ENCODE measurements at regions of chr4 and their contacts with region 1.

Region 1: DNA sequence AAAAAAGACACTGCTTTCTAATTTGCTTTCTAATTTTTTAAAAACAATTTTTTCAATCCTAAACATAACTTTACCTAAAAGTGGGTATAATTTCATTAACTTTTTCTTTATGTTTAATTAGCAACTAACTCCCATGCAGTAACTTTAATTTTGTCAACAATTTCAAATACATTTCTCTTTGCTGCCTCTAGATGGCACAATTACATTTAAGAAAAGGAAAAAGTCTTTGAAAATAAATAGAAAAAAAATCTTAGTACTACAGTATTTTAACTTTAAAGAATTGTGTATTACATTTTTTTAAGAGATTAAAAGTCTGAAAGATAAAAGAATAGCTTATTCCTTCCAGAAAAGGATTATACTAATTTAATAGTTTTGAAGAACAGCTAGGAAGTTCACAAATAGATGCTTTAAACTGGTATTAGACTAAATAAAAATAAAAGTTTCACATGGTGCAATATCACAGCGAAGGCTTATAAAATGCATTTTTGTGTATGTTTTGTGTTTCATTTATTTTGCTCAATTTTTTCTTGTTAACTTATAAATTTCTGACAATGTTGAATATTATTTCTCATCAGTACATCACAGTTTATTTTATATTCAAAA is 105.1 kb downstream of the ADGRA3 start:
- DNase-seq: no peak
- ATAC-seq: no peak
- H3K4me3 Mint-ChIP-seq: no peak overlapping the region
- H3K27ac Mint-ChIP-seq: no peak overlapping the region
- H3K4me1 Mint-ChIP-seq: no peaks in the 10 kb centered on the region
- H3K27me3 Mint-ChIP-seq: no peaks in the 10 kb centered on the region
- CTCF ChIP-seq: peak; percentile 77

Region 2: GRCh38 chr4:22323691-22324090 is 87.1 kb before region 1 on chr4:
- CTCF ChIA-PET with region 1: no interaction called
- POLR2A ChIA-PET with region 1: no interaction called
- intact Hi-C with region 1: no loop called
- DNase-seq: no peak
- ATAC-seq: no peak
- H3K4me3 Mint-ChIP-seq: no peak overlapping the region
- H3K27ac Mint-ChIP-seq: no peak overlapping the region
- H3K4me1 Mint-ChIP-seq: no peaks in the 10 kb centered on the region
- H3K27me3 Mint-ChIP-seq: no peaks in the 10 kb centered on the region
- CTCF ChIP-seq: no peak

Region 3: DNA sequence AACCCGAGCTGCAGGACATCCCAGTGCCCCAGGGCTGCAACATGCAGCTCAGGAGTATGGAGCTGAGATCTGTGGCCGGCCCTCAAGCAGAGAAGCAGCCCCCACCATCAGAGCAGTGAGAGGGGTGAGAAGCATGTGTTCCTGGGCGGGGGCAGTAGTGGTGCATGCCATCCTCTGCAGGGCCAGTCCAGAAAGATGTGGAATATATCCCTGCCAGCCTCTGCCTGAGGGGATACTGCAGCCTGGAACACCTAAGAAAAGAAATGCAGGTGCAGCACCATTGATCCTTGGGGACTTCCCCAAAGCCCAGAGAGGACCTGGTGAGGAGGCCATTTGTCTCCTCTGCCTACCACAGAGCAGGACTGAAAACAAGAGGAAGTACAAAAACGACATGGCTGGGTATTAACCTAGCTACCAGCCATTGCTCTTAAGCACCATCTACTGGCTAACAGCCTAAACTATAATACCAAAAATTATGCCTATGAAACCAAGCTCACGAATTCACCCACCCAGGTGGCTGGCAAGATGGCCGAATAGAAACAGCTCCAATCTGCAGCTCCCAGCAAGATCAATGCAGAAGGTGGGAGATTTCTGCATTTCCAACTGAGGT is 53.7 kb before region 1 on chr4:
- CTCF ChIA-PET with region 1: no interaction called
- POLR2A ChIA-PET with region 1: no interaction called
- intact Hi-C with region 1: no loop called
- DNase-seq: no peak
- ATAC-seq: peak; percentile 71
- H3K4me3 Mint-ChIP-seq: no peak overlapping the region
- H3K27ac Mint-ChIP-seq: no peak overlapping the region
- H3K4me1 Mint-ChIP-seq: no peaks in the 10 kb centered on the region
- H3K27me3 Mint-ChIP-seq: no peaks in the 10 kb centered on the region
- CTCF ChIP-seq: no peak

Region 4: GRCh38 chr4:22463179-22463578 is 52.4 kb after region 1 on chr4:
- CTCF ChIA-PET with region 1: interaction called, 10 read pairs
- POLR2A ChIA-PET with region 1: no interaction called
- intact Hi-C with region 1: no loop called
- DNase-seq: peak; percentile 65
- ATAC-seq: peak; percentile 47
- H3K4me3 Mint-ChIP-seq: no peak overlapping the region
- H3K27ac Mint-ChIP-seq: no peak overlapping the region
- H3K4me1 Mint-ChIP-seq: peaks cover 6% of the 10 kb centered on the region
- H3K27me3 Mint-ChIP-seq: no peaks in the 10 kb centered on the region
- CTCF ChIP-seq: peak; percentile 22

Region 5: DNA sequence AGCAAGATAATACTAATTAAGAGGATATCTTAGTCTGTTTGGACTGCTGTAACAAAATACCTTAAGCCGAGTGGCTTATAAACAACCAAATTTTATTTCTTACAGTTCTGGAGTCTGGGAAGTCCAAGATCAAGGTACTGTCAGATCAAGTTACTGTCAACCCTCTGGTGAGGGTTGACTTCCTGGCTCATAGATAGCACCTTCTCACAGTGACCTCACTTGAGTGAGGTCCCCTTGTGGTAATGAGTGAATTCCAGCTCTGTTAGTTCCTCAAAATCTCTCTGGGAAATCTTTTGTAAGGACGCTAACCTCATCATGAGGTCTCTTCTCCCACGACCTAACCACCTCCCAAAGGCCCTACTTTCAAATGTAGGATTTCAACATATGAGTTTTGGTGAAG is 142.1 kb after region 1 on chr4:
- CTCF ChIA-PET with region 1: no interaction called
- POLR2A ChIA-PET with region 1: no interaction called
- intact Hi-C with region 1: no loop called
- DNase-seq: no peak
- ATAC-seq: no peak
- H3K4me3 Mint-ChIP-seq: no peak overlapping the region
- H3K27ac Mint-ChIP-seq: no peak overlapping the region
- H3K4me1 Mint-ChIP-seq: no peaks in the 10 kb centered on the region
- H3K27me3 Mint-ChIP-seq: no peaks in the 10 kb centered on the region
- CTCF ChIP-seq: no peak

Region 6: GRCh38 chr4:22607382-22607781 is 196.6 kb after region 1 on chr4:
- CTCF ChIA-PET with region 1: interaction called, 22 read pairs
- POLR2A ChIA-PET with region 1: no interaction called
- intact Hi-C with region 1: loop called (anchors 5 kb)
- DNase-seq: peak; percentile 70
- ATAC-seq: peak; percentile 99
- H3K4me3 Mint-ChIP-seq: no peak overlapping the region
- H3K27ac Mint-ChIP-seq: no peak overlapping the region
- H3K4me1 Mint-ChIP-seq: peaks cover 32% of the 10 kb centered on the region
- H3K27me3 Mint-ChIP-seq: no peaks in the 10 kb centered on the region
- CTCF ChIP-seq: peak; percentile 42

Region 7: GRCh38 chr4:22688236-22688635 is 277.5 kb after region 1 on chr4:
- CTCF ChIA-PET with region 1: interaction called, 15 read pairs
- POLR2A ChIA-PET with region 1: no interaction called
- intact Hi-C with region 1: loop called (anchors 5 kb)
- DNase-seq: no peak
- ATAC-seq: no peak
- H3K4me3 Mint-ChIP-seq: no peak overlapping the region
- H3K27ac Mint-ChIP-seq: no peak overlapping the region
- H3K4me1 Mint-ChIP-seq: peaks cover 11% of the 10 kb centered on the region
- H3K27me3 Mint-ChIP-seq: no peaks in the 10 kb centered on the region
- CTCF ChIP-seq: no peak